Activated CD4-positive, alpha-beta T cell treated with anti-CD3 and anti-CD28 coated beads, Interleukin-2, amount 10 ng/mL, durations not matched to agents 24 days and 14 days (primary cell): ENCODE measurements at regions of chr6 and their contacts with region 1.

Region 1: DNA sequence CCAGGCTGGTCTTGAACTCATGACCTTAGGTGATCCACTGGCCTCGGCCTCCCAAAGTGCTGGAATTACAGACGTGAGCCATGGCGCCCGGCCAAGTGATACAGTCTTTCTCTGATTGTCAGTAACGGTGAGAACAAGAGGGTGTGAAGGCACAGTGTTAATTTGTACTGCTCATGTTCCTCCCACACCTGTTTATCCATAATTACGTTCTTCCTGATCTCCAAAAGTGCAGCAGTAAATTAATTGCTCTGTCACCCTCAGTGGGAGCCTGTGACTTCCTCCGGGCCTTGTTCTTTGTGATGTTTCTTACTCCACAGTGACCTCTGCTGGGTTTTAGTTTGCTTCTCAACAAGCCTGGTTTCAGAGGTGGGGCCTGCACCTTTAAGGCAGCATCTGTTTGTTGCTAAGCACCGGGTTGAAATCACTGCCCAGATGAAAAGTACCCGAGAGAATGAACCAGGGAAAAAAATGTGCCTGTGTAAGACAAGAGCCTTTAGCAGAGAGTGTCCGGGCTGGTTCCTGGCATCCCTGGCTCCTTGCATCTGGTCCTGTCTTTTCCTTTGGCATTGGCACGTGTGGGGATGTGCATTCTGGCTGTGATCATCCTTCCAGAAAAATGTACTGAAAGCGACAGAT is 89.1 kb upstream of the CLDN20 start:
- DNase-seq: peak; percentile 92
- H3K4me3 Mint-ChIP-seq: peak overlapping the region; percentile 17
- H3K27ac Mint-ChIP-seq: peak overlapping the region; percentile 88
- H3K4me1 Mint-ChIP-seq: peaks cover 42% of the 10 kb centered on the region
- H3K27me3 Mint-ChIP-seq: peaks cover 2% of the 10 kb centered on the region

Region 2: GRCh38 chr6:154606457-154606856 is 568.2 kb before region 1 on chr6:
- intact Hi-C with region 1: loop called (anchors 5 kb)
- DNase-seq: peak; percentile 86
- H3K4me3 Mint-ChIP-seq: peak overlapping the region; percentile 57
- H3K27ac Mint-ChIP-seq: peak overlapping the region; percentile 82
- H3K4me1 Mint-ChIP-seq: peaks cover 34% of the 10 kb centered on the region
- H3K27me3 Mint-ChIP-seq: no peaks in the 10 kb centered on the region

Region 3: GRCh38 chr6:154868143-154868594 is 306.5 kb before region 1 on chr6:
- intact Hi-C with region 1: loop called (anchors 1 kb)
- DNase-seq: no peak
- H3K4me3 Mint-ChIP-seq: no peak overlapping the region
- H3K27ac Mint-ChIP-seq: no peak overlapping the region
- H3K4me1 Mint-ChIP-seq: peaks cover 3% of the 10 kb centered on the region
- H3K27me3 Mint-ChIP-seq: no peaks in the 10 kb centered on the region

Region 4: GRCh38 chr6:155050311-155050710 is 124.4 kb before region 1 on chr6:
- intact Hi-C with region 1: loop called (anchors 1 kb)
- DNase-seq: peak; percentile 82
- H3K4me3 Mint-ChIP-seq: peak overlapping the region; percentile 65
- H3K27ac Mint-ChIP-seq: peak overlapping the region; percentile 95
- H3K4me1 Mint-ChIP-seq: peaks cover 36% of the 10 kb centered on the region
- H3K27me3 Mint-ChIP-seq: no peaks in the 10 kb centered on the region

Region 5: GRCh38 chr6:155115893-155116570 is 58.7 kb before region 1 on chr6:
- intact Hi-C with region 1: loop called (anchors 1 kb)
- DNase-seq: no peak
- H3K4me3 Mint-ChIP-seq: peak overlapping the region; percentile 47
- H3K27ac Mint-ChIP-seq: peak overlapping the region; percentile 86
- H3K4me1 Mint-ChIP-seq: peaks cover 31% of the 10 kb centered on the region
- H3K27me3 Mint-ChIP-seq: no peaks in the 10 kb centered on the region

Region 6: DNA sequence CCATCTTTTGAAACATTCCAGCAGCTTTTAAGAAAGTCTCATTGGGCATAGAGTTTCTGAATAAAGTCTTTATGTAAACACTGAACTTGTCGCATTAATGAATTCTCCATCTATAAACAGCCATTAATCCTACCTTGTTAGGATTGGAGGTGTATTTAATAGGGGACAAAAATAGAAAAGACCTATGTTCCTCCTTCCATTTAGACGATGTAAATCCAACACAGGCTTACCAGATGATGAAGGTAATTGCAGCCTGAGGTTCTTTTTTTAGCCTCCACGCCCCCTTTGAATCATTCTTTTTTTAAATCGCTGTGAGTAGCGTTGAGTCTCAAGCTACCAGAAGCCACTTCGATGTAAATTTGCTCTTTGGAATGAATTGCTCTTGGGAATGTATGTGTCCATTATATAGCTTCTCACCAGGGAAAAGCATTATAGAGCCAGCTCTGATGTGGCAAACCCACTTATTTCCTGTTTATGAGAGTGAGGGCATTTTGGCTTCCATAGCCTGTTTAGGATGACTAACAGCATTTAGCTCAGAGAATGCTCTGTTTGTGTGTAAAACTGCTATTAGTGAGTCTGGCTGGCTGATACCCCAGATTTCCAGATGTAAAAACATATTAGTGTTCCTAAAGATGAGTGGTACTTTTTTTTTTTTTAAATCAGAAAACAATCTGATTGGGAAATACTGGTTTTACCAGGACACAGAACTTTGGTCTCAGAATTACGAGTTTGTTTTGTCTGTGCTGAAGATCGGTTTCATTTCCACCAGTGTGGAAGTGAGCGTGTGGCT is 14.2 kb after region 1 on chr6:
- intact Hi-C with region 1: loop called (anchors 1 kb)
- DNase-seq: no peak
- H3K4me3 Mint-ChIP-seq: peak overlapping the region; percentile 16
- H3K27ac Mint-ChIP-seq: peak overlapping the region; percentile 91
- H3K4me1 Mint-ChIP-seq: peaks cover 43% of the 10 kb centered on the region
- H3K27me3 Mint-ChIP-seq: no peaks in the 10 kb centered on the region

Region 7: DNA sequence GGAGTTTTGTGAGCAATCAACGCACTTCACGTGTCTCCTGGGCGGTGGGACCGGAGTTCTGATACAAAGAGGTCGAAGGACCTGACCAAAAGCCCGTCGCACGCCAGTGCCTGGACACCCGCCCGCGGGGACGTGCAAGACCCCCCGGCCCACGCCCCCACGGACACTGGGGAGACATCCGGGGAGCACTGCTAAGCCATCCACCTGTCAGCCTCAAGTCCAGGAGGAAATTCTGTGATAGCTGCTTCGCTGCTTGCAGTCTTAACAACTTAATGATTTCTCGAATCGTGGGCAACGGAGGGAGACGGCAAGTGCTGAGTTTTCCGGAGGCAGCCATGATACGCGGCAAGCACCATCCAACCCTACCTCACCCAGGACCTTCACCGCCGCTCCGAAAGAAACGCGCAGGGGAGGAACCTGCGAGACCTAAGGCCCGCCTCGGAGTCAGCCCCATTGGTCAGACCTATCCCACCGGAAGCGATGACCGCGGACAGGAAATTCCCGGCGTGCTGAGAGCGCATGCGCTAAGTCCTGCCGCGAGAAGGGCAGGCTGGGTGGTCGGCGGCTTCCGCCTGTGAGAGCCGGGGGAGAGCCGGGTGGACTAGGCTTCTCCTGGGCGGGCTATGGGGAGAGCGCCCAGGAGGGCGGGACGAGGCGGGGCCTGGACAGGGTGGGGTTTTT is 139.5 kb after region 1 on chr6 and contains the start of gene TFB1M:
- intact Hi-C with region 1: loop called (anchors 2 kb)
- DNase-seq: peak; percentile 100
- H3K4me3 Mint-ChIP-seq: peak within 1 kb of the TSS; percentile 99
- H3K27ac Mint-ChIP-seq: peak within 1 kb of the TSS; percentile 98
- H3K4me1 Mint-ChIP-seq: peaks cover 27% of the 10 kb centered on the region
- H3K27me3 Mint-ChIP-seq: peaks cover 2% of the 10 kb centered on the region
- total RNA-seq, gene TFB1M: 36.8 and 41.4 TPM in 2 replicates

Region 8: DNA sequence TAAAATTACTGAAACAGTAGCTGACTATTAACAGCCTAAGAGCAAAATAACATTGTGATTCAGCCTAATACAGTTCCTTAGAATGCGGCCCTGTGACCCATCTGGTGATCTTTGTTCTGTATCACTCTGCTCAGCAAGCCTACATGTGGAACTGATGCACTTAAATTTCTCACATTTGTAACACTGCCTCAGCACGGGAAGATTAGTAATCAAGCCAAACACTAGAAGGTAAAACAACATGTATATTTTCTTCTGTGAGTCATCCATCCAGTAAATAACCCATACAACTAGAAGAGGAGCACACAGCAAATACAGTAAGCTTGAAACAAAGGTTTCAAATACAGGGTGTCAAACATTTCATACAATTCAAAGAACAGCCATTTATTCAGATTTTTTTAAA is 470.6 kb after region 1 on chr6:
- intact Hi-C with region 1: no loop called
- DNase-seq: no peak
- H3K4me3 Mint-ChIP-seq: no peak overlapping the region
- H3K27ac Mint-ChIP-seq: no peak overlapping the region
- H3K4me1 Mint-ChIP-seq: no peaks in the 10 kb centered on the region
- H3K27me3 Mint-ChIP-seq: no peaks in the 10 kb centered on the region